ENCODE measurements at regions of chrX and their contacts with region 1.

Region 1: GRCh38 chrX:2286731-2287130 is 214.0 kb downstream of the DHRSX start:
- DNase-seq: no peak
- H3K4me3 ChIP-seq: no peak overlapping the region
- H3K27ac ChIP-seq: no peak overlapping the region
- H3K4me1 ChIP-seq: no peaks in the 10 kb centered on the region
- H3K27me3 ChIP-seq: no peaks in the 10 kb centered on the region
- CTCF ChIP-seq: no peak

Region 2: GRCh38 chrX:1941321-1941720 is 345.4 kb before region 1 on chrX:
- CTCF ChIA-PET with region 1: no interaction called
- dilution Hi-C with region 1: no loop called
- in situ Hi-C with region 1: no loop called
- intact Hi-C with region 1: no loop called
- DNase-seq: no peak
- H3K4me3 ChIP-seq: no peak overlapping the region
- H3K27ac ChIP-seq: no peak overlapping the region
- H3K4me1 ChIP-seq: no peaks in the 10 kb centered on the region
- H3K27me3 ChIP-seq: no peaks in the 10 kb centered on the region
- CTCF ChIP-seq: no peak

Region 3: GRCh38 chrX:2183193-2183725 is 103.5 kb before region 1 on chrX:
- CTCF ChIA-PET with region 1: no interaction called
- dilution Hi-C with region 1: loop called (anchors 5 kb)
- in situ Hi-C with region 1: no loop called
- intact Hi-C with region 1: no loop called
- DNase-seq: no peak
- H3K4me3 ChIP-seq: no peak overlapping the region
- H3K27ac ChIP-seq: no peak overlapping the region
- H3K4me1 ChIP-seq: no peaks in the 10 kb centered on the region
- H3K27me3 ChIP-seq: no peaks in the 10 kb centered on the region
- CTCF ChIP-seq: no peak

Region 4: GRCh38 chrX:2243913-2244460 is 42.7 kb before region 1 on chrX:
- CTCF ChIA-PET with region 1: no interaction called
- dilution Hi-C with region 1: loop called (anchors 5 kb)
- in situ Hi-C with region 1: no loop called
- intact Hi-C with region 1: no loop called
- DNase-seq: no peak
- H3K4me3 ChIP-seq: no peak overlapping the region
- H3K27ac ChIP-seq: no peak overlapping the region
- H3K4me1 ChIP-seq: no peaks in the 10 kb centered on the region
- H3K27me3 ChIP-seq: no peaks in the 10 kb centered on the region
- CTCF ChIP-seq: no peak

Region 5: GRCh38 chrX:2360731-2361130 is 74.0 kb after region 1 on chrX:
- CTCF ChIA-PET with region 1: no interaction called
- dilution Hi-C with region 1: no loop called
- in situ Hi-C with region 1: no loop called
- intact Hi-C with region 1: no loop called
- DNase-seq: no peak
- H3K4me3 ChIP-seq: no peak overlapping the region
- H3K27ac ChIP-seq: no peak overlapping the region
- H3K4me1 ChIP-seq: no peaks in the 10 kb centered on the region
- H3K27me3 ChIP-seq: no peaks in the 10 kb centered on the region
- CTCF ChIP-seq: no peak

Region 6: GRCh38 chrX:2484721-2485648 is 198.3 kb after region 1 on chrX:
- CTCF ChIA-PET with region 1: no interaction called
- dilution Hi-C with region 1: no loop called
- in situ Hi-C with region 1: no loop called
- intact Hi-C with region 1: no loop called
- DNase-seq: no peak
- H3K4me3 ChIP-seq: no peak overlapping the region
- H3K27ac ChIP-seq: peak overlapping the region; percentile 2
- H3K4me1 ChIP-seq: peaks cover 17% of the 10 kb centered on the region
- H3K27me3 ChIP-seq: no peaks in the 10 kb centered on the region
- CTCF ChIP-seq: no peak

Measured in mammary epithelial cell (primary cell).